Left lung (tissue), 14 donors: ENCODE measurements at regions of chr22 and their contacts with region 1.

Region 1: DNA sequence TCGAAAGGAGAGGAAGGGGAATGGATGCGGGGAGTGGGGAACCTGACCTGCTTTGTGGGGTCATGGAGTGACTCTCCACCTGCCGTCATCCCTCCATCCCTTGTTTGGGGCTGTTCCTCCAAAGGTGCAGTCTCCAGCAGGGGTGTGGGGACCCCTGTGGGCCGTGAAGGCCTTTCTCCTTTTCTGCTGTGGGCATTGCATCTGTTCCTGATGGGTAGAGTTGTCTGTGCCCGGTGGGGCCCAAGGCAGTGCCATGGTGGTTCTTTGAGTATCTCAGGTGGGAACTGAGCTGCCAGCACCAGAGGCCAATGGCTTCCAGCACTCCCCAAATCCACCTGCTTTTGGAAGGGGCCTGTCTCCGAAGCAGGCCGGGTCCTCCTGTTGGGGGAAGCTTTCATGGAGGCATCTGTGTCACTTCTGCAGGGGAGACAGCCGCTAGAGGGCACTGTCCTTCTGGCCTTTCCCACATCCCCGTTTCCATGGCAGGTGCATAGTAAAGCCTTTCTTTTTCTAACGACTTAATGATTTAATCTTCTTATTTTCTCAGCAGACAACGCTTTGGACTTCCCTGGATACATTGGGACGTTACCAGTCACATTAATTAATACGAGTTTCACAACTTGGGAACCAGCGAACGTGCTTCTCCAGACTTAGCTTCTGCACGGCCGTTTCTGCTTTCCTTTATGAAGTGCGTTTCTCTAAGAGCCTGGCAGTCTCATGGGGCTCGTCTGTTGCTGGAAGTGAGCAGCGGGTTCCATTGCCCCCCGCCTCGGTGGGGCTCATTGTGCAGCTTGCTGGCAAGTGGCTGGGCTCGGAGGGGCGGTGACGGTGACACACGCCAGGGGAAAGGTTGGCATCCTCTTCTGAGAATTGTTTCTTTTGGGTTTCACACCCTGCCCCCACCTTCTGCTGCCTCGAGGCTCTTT is 57.1 kb downstream of the PARVB start:
- DNase-seq: peak in 3 of 4 donors; percentile 53 to 79 (median 75)
- ATAC-seq: peak; percentile 85
- H3K4me3 ChIP-seq: no peak overlapping the region
- H3K27ac ChIP-seq: no peak overlapping the region
- H3K4me1 ChIP-seq: peaks cover 0 to 7% of the 10 kb centered on the region in 2 donors
- H3K27me3 ChIP-seq: no peaks in the 10 kb centered on the region
- CTCF ChIP-seq: peak; percentile 83 to 90

Region 2: GRCh38 chr22:43993027-43993760 is 88.0 kb before region 1 on chr22:
- intact Hi-C with region 1: loop called in 1 of 2 experiments (anchors 5 kb)
- DNase-seq: peak; percentile 38 to 75 (median 54)
- ATAC-seq: peak; percentile 90
- H3K4me3 ChIP-seq: no peak overlapping the region
- H3K27ac ChIP-seq: no peak overlapping the region
- H3K4me1 ChIP-seq: peaks cover 0 to 13% of the 10 kb centered on the region in 2 donors
- H3K27me3 ChIP-seq: no peaks in the 10 kb centered on the region
- CTCF ChIP-seq: peak; percentile 96 to 97

Region 3: DNA sequence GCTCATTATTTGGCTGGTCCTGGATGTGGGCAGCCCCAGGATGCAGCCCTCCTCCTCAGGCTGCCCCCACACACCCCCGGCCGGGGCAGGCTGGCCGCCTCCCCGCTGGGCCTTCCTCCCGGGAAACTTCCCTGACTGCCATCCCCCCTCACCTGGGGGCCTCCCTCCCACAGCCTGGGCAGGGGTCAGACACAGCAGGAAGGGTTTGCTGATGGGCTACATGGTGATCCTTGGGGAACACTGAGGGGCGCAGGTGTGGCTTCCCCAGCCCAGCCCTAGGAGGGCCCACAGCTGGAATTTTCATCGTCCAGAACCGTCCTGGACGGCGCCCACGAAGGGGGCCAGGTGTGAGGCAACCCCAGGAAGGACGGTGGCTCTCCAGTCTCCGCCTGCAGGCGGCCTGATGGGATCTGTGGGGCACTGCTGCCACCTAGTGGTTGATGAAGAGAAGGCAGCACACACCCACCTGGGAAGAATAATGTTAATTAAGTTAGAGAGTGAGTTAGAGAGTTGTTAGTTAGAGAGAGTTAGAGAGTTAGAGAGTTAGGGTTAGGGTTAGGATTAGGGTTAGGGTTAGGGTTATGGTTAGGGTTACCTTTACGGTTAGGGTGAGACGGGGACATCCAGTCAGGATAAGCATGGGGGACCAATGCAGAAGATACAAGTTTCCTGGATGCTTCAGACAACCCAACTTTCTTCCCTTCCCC is 544.9 kb after region 1 on chr22:
- intact Hi-C with region 1: loop called in 1 of 2 experiments (anchors 5 kb)
- DNase-seq: peak; percentile 55 to 91 (median 75)
- ATAC-seq: peak; percentile 95
- H3K4me3 ChIP-seq: no peak overlapping the region
- H3K27ac ChIP-seq: no peak overlapping the region
- H3K4me1 ChIP-seq: no peaks in the 10 kb centered on the region
- H3K27me3 ChIP-seq: peaks cover 0 to 59% of the 10 kb centered on the region in 2 donors
- CTCF ChIP-seq: peak; percentile 97 to 98